Sigmoid colon (tissue), 7 donors: ENCODE measurements at regions of chr17 and their contacts with region 1.

Region 1: GRCh38 chr17:57868007-57868909 is 18.4 kb upstream of the MRPS23 start:
- DNase-seq: peak; percentile 96
- H3K4me3 ChIP-seq: no peak overlapping the region
- H3K27ac ChIP-seq: peak overlapping the region; percentile 87 to 97 (median 94)
- H3K4me1 ChIP-seq: peaks cover 0 to 75% (median 65%) of the 10 kb centered on the region in 4 donors
- H3K27me3 ChIP-seq: no peaks in the 10 kb centered on the region
- CTCF ChIP-seq: peak; percentile 44 to 79 (median 55)
- EP300 ChIP-seq: no peak
- POLR2A ChIP-seq: no peak

Region 2: DNA sequence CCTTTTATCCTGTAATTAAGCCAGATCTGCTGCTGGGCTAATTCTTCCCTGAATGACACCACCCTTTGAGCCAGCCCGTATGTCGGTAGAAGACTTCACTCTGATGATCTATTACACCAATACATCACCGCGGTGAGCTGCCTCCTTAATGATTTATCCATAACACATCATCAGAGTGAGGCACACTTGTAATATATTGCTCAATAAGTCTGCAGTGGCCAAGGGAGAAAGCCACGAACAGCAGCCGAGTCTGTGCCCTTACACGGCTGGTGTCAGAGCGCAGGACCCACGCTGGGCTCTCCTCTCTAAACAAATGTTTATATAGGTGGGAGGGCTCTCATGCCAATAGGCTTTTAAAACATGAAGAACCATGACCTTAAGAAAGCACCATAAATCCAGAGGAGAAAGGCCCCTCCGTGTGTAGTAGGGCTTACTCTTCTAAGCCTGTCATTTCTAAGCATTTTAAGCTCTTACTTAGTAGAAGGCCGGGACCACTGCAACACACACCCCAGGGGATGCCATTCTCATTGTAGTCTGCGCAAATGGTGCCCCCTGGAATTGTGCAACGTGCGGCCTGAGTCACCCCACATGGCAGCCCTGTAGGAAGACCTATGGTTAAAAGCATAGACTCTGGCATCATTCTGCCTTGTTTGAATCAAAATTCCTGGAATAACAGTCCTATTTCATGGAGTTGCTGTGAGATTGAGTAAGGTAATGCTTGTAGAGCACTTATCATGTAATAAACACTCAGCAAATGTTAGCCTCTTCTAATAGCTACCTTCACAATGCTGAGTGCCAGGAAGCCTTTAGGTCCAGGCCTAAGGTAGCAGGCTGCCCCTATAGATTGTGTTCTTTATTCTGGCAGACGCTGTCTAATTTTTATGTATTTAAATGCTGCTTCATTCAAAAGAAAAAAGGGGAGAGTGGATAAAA is 44.5 kb before region 1 on chr17:
- intact Hi-C with region 1: no loop called
- DNase-seq: no peak
- H3K4me3 ChIP-seq: no peak overlapping the region
- H3K27ac ChIP-seq: no peak overlapping the region
- H3K4me1 ChIP-seq: no peaks in the 10 kb centered on the region
- H3K27me3 ChIP-seq: no peaks in the 10 kb centered on the region
- CTCF ChIP-seq: no peak
- EP300 ChIP-seq: no peak
- POLR2A ChIP-seq: no peak

Region 3: GRCh38 chr17:57948555-57949428 is 80.5 kb after region 1 on chr17:
- intact Hi-C with region 1: loop called (anchors 2 kb)
- DNase-seq: peak; percentile 75
- H3K4me3 ChIP-seq: no peak overlapping the region
- H3K27ac ChIP-seq: peak overlapping the region; percentile 97 to 100 (median 99)
- H3K4me1 ChIP-seq: peaks cover 0 to 97% (median 95%) of the 10 kb centered on the region in 4 donors
- H3K27me3 ChIP-seq: no peaks in the 10 kb centered on the region
- CTCF ChIP-seq: no peak
- EP300 ChIP-seq: no peak
- POLR2A ChIP-seq: no peak